Calu3 (cell line): ENCODE measurements at regions of chr11 and their contacts with region 1.

Region 1: DNA sequence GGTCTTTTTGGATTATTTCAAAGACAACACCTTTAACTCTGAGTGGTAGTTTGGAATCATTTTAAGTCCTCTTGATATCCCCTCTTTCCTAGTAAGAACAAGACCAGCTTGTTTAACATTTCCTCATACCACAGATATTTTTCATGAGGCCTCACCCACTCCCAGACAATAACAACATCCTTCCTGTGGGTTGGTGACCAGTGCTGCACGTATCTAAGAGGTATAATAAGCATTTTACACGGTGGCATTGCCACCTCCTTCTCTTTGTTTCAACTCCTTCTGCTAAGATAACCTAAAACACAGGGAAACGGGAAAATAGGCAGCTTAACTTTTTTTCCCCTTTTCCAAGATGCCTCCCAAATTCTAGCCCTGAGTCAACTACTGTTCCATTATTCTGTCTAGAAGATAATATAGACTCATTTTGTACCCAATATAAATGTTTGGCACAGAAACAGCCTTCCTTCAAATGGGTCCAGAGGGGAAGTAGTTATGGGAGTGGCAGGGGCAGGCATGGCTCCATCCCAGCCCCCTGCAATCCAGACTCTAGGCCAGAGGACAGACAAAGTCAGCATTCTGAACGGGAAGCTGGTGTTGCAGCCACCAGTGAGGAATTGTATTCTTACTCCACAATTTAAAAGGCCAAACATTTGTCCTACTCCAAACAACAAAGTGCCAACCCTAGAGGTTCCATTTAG is 28.5 kb downstream of the MAML2 start:
- DNase-seq: peak; percentile 57
- H3K4me3 Mint-ChIP-seq: peak overlapping the region; percentile 54
- H3K27ac Mint-ChIP-seq: peak overlapping the region; percentile 97
- H3K4me1 Mint-ChIP-seq: peaks cover 68% of the 10 kb centered on the region
- H3K27me3 Mint-ChIP-seq: no peaks in the 10 kb centered on the region
- CTCF ChIP-seq: no peak

Region 2: DNA sequence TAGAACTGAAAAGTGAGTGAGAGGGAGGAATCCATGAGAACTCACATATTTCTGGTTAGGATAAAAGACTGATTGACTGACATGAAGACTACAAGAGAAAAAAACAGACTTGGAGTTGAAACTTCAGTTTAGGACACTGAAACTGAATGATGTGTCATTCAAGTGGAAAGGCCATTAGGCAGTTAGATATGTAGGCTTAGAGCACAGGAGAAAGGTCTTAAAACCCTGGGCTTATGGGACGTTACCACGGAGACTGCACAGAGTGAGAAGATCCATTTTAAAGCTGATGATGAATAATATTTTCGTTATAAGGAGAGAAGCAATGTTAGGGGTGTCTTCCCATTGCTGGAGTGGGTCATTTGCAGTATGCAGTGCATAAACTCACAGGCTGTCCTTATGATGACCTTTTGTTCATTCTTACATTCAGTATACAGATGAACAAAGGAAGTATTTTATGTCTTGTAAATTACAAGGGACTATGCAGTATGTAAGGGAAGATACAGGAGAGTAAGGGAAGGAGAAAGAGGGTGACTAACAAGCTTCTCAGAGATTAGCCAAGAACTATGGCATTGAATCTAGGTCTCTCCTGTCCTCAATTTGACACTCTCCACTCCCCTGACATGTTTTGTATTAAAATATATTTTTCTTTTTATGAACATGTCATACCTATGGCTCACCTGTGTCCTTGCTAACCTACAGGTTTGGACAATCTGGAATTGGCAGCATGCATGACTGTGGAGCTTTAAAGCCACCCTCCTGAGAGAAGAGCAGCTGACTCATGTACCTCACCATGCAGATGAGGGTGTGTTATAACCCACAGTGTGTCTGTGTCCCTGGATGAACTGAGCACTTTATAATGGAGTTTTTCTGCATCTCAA is 35.2 kb before region 1 on chr11:
- CTCF ChIA-PET with region 1: no interaction called
- intact Hi-C with region 1: loop called (anchors 5 kb)
- DNase-seq: no peak
- H3K4me3 Mint-ChIP-seq: no peak overlapping the region
- H3K27ac Mint-ChIP-seq: peak overlapping the region; percentile 73
- H3K4me1 Mint-ChIP-seq: peaks cover 53% of the 10 kb centered on the region
- H3K27me3 Mint-ChIP-seq: no peaks in the 10 kb centered on the region
- CTCF ChIP-seq: no peak

Region 3: GRCh38 chr11:96384150-96384549 is 69.7 kb after region 1 on chr11:
- CTCF ChIA-PET with region 1: no interaction called
- intact Hi-C with region 1: no loop called
- DNase-seq: no peak
- H3K4me3 Mint-ChIP-seq: no peak overlapping the region
- H3K27ac Mint-ChIP-seq: no peak overlapping the region
- H3K4me1 Mint-ChIP-seq: peaks cover 15% of the 10 kb centered on the region
- H3K27me3 Mint-ChIP-seq: no peaks in the 10 kb centered on the region
- CTCF ChIP-seq: no peak